Endothelial cell of umbilical vein (primary cell): ENCODE measurements at regions of chr3 and their contacts with region 1.

Region 1: GRCh38 chr3:42184651-42185443 is 81.1 kb downstream of the CCK start:
- DNase-seq: peak; percentile 84
- H3K4me3 ChIP-seq: no peak overlapping the region
- H3K27ac ChIP-seq: peak overlapping the region; percentile 95
- H3K4me1 ChIP-seq: peaks cover 21% of the 10 kb centered on the region
- H3K27me3 ChIP-seq: no peaks in the 10 kb centered on the region
- CTCF ChIP-seq: no peak
- POLR2A ChIP-seq: no peak

Region 2: GRCh38 chr3:42159706-42160472 is 25.0 kb before region 1 on chr3:
- CTCF ChIA-PET with region 1: interaction called, 30 read pairs
- POLR2A ChIA-PET with region 1: no interaction called
- dilution Hi-C with region 1: no loop called
- intact Hi-C with region 1: loop called (anchors 2 kb)
- DNase-seq: peak; percentile 36
- H3K4me3 ChIP-seq: peak overlapping the region in 1 of 3 experiments; percentile 51
- H3K27ac ChIP-seq: peak overlapping the region; percentile 85
- H3K4me1 ChIP-seq: peaks cover 34% of the 10 kb centered on the region
- H3K27me3 ChIP-seq: no peaks in the 10 kb centered on the region
- CTCF ChIP-seq: no peak
- POLR2A ChIP-seq: no peak

Region 3: GRCh38 chr3:42264399-42265058 is 79.7 kb after region 1 on chr3:
- CTCF ChIA-PET with region 1: no interaction called
- POLR2A ChIA-PET with region 1: no interaction called
- dilution Hi-C with region 1: no loop called
- intact Hi-C with region 1: no loop called
- DNase-seq: no peak
- H3K4me3 ChIP-seq: no peak overlapping the region
- H3K27ac ChIP-seq: no peak overlapping the region
- H3K4me1 ChIP-seq: no peaks in the 10 kb centered on the region
- H3K27me3 ChIP-seq: peaks cover 58 to 69% of the 10 kb centered on the region in 2 experiments
- CTCF ChIP-seq: no peak
- POLR2A ChIP-seq: no peak